ENCODE measurements at regions of chr6 and their contacts with region 1.

Region 1: DNA sequence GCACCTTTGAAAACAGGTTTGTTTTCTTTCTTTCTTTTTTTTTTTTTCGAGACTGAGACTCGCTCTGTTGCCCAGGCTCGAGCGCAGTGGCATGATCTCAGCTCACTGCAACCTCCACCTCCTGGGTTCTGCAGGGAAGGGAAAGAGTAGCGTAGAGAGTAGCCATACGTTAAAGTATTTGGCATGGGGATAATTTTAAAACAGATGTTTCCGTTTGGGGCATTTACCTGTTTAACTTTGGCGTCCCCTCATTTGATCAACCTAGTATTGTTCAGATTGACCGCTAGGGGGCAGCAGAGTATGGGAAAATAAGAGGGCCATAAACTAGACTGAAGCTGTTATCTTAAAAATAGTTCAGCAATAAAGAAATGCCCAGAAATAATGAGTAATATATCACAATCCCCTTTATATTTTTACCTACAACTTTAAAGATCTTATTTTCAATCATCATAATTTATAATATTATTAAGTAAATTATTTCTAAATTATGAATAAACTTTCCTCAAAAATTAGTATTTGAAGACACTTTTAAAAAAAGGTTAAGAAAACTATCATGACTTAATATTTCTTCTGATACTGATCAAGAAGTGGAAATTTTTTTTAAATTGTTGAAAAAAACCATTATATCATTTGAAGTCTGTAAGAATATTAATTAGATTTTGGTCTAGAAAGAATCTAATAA is 7.6 kb upstream of the TAAR9 start:
- DNase-seq: no peak
- ATAC-seq: peak; percentile 82
- H3K4me3 Mint-ChIP-seq: peak overlapping the region; percentile 83
- H3K27ac Mint-ChIP-seq: no peak overlapping the region
- H3K4me1 Mint-ChIP-seq: peaks cover 8% of the 10 kb centered on the region
- H3K27me3 Mint-ChIP-seq: no peaks in the 10 kb centered on the region
- CTCF ChIP-seq: no peak

Region 2: DNA sequence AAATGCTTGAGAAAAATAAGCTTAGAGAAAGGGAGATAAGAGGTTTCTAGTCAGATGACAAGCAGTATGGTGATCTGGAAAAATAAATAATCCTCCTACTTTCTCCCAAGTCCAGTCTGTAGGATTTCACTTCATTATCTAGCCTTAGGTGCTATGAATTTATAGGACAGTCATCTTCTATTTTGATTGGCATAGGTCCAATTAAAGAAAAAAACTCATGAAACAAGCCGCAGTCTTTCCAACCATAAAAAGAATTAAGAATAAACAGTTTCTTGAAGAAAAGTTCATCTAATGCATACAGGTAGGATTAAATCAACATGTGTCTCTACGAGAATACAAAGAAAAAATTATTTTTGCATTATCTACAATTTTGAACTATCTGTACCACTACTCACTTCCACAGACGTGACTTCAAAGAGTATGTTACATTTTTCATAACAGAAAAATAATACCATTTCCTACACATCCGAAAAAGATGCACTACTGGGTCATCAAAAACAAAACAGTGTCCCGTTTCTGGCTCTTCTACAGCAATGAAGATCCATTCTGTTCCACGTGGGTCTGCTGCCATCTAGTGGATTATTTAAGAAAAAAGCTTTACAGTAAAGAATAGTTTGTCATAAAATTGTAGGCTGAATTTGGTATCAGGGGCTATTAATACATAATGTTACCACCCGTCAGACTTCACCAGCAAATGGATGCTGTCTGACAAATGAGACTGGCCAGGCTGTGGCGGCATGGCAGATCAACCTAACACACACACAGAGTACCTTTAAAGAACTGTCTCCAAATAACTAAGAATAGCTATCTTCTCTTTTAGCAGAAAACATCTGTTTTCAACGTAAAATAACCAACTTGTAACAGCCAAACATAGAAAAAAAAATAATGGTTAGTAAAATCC is 46.4 kb before region 1 on chr6:
- CTCF ChIA-PET with region 1: interaction called, 11 read pairs
- POLR2A ChIA-PET with region 1: no interaction called
- intact Hi-C with region 1: no loop called
- DNase-seq: no peak
- ATAC-seq: peak; percentile 74
- H3K4me3 Mint-ChIP-seq: peak overlapping the region; percentile 61
- H3K27ac Mint-ChIP-seq: peak overlapping the region; percentile 82
- H3K4me1 Mint-ChIP-seq: peaks cover 85% of the 10 kb centered on the region
- H3K27me3 Mint-ChIP-seq: no peaks in the 10 kb centered on the region
- CTCF ChIP-seq: peak; percentile 84

Region 3: DNA sequence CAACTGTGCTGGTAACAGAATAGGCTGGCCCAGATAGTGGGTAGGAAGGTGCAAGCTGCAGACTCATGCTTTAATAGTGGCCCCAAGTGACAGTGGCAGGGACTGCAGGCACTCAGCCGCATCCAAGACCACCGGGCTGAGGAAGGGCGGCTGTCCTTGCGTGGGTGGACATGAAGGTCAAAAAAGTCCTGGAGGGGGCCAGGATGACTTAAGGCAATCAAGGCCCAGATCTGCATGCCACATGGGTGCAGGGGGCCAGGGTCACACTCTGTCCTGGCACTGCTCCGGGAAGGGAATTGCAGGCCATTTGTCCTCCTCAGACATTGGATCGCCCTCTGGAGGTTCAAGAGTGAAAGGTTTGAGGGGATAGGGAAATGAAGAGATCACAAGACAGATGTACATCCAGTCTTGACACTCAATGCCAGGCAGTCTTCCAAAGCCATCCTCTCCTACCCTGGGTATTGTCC is 237.7 kb after region 1 on chr6:
- CTCF ChIA-PET with region 1: interaction called, 16 read pairs
- POLR2A ChIA-PET with region 1: no interaction called
- intact Hi-C with region 1: loop called (anchors 1 kb)
- DNase-seq: peak; percentile 33
- ATAC-seq: peak; percentile 79
- H3K4me3 Mint-ChIP-seq: peak overlapping the region; percentile 47
- H3K27ac Mint-ChIP-seq: no peak overlapping the region
- H3K4me1 Mint-ChIP-seq: peaks cover 18% of the 10 kb centered on the region
- H3K27me3 Mint-ChIP-seq: no peaks in the 10 kb centered on the region
- CTCF ChIP-seq: peak; percentile 30

Region 4: GRCh38 chr6:132962936-132963868 is 432.8 kb after region 1 on chr6:
- CTCF ChIA-PET with region 1: no interaction called
- POLR2A ChIA-PET with region 1: no interaction called
- intact Hi-C with region 1: loop called (anchors 1 kb)
- DNase-seq: peak; percentile 19
- ATAC-seq: peak; percentile 69
- H3K4me3 Mint-ChIP-seq: no peak overlapping the region
- H3K27ac Mint-ChIP-seq: no peak overlapping the region
- H3K4me1 Mint-ChIP-seq: no peaks in the 10 kb centered on the region
- H3K27me3 Mint-ChIP-seq: peaks cover 24% of the 10 kb centered on the region
- CTCF ChIP-seq: peak; percentile 56

Region 5: GRCh38 chr6:133553652-133554051 is 1023.2 kb after region 1 on chr6:
- CTCF ChIA-PET with region 1: no interaction called
- POLR2A ChIA-PET with region 1: no interaction called
- intact Hi-C with region 1: loop called (anchors 1 kb)
- DNase-seq: no peak
- ATAC-seq: no peak
- H3K4me3 Mint-ChIP-seq: no peak overlapping the region
- H3K27ac Mint-ChIP-seq: no peak overlapping the region
- H3K4me1 Mint-ChIP-seq: no peaks in the 10 kb centered on the region
- H3K27me3 Mint-ChIP-seq: peaks cover 7% of the 10 kb centered on the region
- CTCF ChIP-seq: no peak

Region 6: DNA sequence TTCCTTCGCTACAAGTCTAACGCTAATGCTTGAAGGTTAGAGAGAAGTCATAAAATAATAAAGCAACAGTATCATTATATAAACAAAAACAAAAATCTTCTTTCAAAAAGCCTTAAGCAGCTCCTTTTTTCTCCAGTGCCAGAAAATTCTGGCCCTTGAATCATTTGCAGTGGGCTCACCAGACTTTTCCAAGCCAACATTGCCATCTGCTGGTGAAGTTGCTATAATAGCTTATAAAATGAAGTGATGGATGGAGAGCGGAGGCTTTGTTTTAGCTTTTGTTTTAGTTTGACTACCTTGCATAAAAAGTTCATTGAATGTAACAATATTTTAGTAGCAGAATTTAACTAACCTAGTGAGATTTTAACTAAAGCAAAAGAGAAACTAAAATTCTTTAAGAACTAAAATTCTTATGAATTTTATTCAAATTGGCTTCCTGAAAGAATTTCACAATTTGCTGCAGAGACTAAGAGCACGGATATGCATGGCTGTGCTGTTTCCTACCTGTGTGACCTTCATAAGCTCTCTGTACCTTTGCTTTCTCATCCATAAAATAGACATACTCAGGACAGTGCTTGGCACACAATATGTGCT is 1566.8 kb after region 1 on chr6:
- CTCF ChIA-PET with region 1: no interaction called
- POLR2A ChIA-PET with region 1: no interaction called
- intact Hi-C with region 1: loop called (anchors 2 kb)
- DNase-seq: no peak
- ATAC-seq: peak; percentile 45
- H3K4me3 Mint-ChIP-seq: no peak overlapping the region
- H3K27ac Mint-ChIP-seq: no peak overlapping the region
- H3K4me1 Mint-ChIP-seq: peaks cover 4% of the 10 kb centered on the region
- H3K27me3 Mint-ChIP-seq: peaks cover 6% of the 10 kb centered on the region
- CTCF ChIP-seq: no peak